ENCODE measurements at regions of chr4 and their contacts with region 1.

Region 1: DNA sequence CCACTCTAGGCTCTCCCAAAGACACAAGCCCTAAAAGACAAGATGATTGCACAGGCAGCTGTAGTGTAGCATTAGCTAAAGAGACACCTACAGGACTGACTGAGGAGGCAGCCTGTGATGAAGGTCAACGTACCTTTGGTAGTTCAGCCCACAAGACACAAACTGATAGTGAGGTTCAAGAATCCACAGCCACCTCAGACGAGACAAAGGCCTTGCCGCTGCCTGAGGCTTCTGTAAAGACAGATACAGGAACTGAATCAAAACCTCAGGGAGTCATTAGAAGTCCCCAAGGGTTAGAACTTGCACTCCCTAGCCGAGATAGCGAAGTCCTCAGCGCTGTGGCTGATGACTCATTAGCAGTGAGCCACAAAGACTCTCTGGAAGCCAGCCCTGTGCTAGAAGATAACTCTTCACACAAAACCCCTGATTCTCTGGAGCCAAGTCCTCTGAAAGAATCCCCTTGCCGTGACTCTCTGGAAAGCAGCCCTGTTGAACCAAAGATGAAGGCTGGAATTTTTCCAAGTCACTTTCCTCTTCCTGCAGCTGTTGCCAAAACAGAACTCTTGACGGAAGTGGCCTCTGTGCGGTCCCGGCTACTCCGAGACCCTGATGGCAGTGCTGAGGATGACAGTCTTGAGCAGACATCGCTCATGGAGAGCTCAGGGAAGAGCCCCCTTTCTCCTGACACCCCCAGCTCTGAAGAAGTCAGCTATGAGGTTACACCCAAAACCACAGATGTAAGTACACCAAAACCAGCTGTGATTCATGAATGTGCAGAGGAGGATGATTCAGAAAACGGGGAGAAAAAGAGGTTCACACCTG is 306.3 kb downstream of the ANK2 start:
- DNase-seq: peak; percentile 79
- H3K4me3 Mint-ChIP-seq: peak overlapping the region; percentile 60
- H3K27ac Mint-ChIP-seq: peak overlapping the region; percentile 89
- H3K4me1 Mint-ChIP-seq: peaks cover 42% of the 10 kb centered on the region
- H3K27me3 Mint-ChIP-seq: peaks cover 54% of the 10 kb centered on the region

Region 2: DNA sequence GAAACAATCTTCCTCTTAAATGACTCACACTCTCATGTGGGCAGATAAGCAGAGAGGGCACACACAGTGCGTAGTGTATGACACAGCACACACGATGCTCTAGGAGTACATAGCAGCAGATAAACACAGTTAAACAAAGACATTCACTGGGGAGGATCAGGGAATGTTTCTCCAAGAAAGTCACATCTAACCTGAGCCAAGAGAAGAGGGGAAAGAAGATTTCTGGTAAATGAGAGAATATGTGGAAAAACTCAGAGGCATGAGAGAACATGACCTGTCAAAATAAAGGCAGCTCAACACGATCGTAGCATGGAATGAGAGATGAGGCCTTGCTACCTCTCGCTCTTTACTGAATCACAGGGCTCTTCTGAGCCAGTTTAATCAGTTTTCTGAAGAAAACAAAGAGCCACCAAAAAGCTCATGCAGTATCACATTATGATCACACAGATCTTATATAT is 55.3 kb before region 1 on chr4:
- intact Hi-C with region 1: loop called (anchors 1 kb)
- DNase-seq: no peak
- H3K4me3 Mint-ChIP-seq: no peak overlapping the region
- H3K27ac Mint-ChIP-seq: peak overlapping the region; percentile 86
- H3K4me1 Mint-ChIP-seq: peaks cover 8% of the 10 kb centered on the region
- H3K27me3 Mint-ChIP-seq: peaks cover 17% of the 10 kb centered on the region

Region 3: GRCh38 chr4:113384600-113384999 is 28.8 kb after region 1 on chr4:
- intact Hi-C with region 1: loop called (anchors 1 kb)
- DNase-seq: no peak
- H3K4me3 Mint-ChIP-seq: no peak overlapping the region
- H3K27ac Mint-ChIP-seq: peak overlapping the region; percentile 48
- H3K4me1 Mint-ChIP-seq: peaks cover 11% of the 10 kb centered on the region
- H3K27me3 Mint-ChIP-seq: peaks cover 17% of the 10 kb centered on the region

Region 4: GRCh38 chr4:113397114-113397701 is 41.4 kb after region 1 on chr4:
- intact Hi-C with region 1: no loop called
- DNase-seq: no peak
- H3K4me3 Mint-ChIP-seq: no peak overlapping the region
- H3K27ac Mint-ChIP-seq: no peak overlapping the region
- H3K4me1 Mint-ChIP-seq: peaks cover 3% of the 10 kb centered on the region
- H3K27me3 Mint-ChIP-seq: peaks cover 4% of the 10 kb centered on the region

Region 5: GRCh38 chr4:113539408-113539807 is 183.6 kb after region 1 on chr4:
- intact Hi-C with region 1: loop called (anchors 1 kb)
- DNase-seq: no peak
- H3K4me3 Mint-ChIP-seq: no peak overlapping the region
- H3K27ac Mint-ChIP-seq: peak overlapping the region; percentile 85
- H3K4me1 Mint-ChIP-seq: peaks cover 45% of the 10 kb centered on the region
- H3K27me3 Mint-ChIP-seq: no peaks in the 10 kb centered on the region

Region 6: GRCh38 chr4:113625902-113626301 is 270.1 kb after region 1 on chr4:
- intact Hi-C with region 1: loop called (anchors 2 kb)
- DNase-seq: no peak
- H3K4me3 Mint-ChIP-seq: peak overlapping the region; percentile 1
- H3K27ac Mint-ChIP-seq: peak overlapping the region; percentile 52
- H3K4me1 Mint-ChIP-seq: peaks cover 45% of the 10 kb centered on the region
- H3K27me3 Mint-ChIP-seq: no peaks in the 10 kb centered on the region

Region 7: DNA sequence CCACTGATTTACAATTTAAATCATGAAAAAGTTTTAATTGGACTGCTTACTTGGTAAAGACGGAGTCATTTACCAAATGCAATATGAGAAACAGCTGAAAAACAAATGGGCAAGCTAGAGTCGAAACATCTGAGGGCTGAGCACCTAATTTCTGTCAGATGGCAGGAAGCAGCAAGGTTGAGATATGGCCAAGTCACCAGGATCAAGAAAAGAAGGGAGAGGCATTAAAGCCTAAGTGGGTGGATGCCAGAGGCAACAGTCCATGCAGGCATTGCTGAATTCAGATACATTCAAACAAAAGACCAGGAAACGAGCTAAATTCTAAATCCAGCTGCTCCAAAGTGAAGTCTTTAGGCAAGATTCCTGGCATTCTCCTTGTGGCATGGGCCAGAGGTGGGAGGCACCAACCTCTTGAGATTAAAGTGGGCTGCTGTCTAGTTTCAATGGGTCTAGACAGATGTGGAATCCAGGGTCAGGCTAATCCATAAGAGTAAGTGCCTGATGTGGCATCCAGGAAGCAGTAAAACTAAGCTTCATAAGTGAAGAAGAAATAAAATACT is 631.7 kb after region 1 on chr4:
- intact Hi-C with region 1: no loop called
- DNase-seq: no peak
- H3K4me3 Mint-ChIP-seq: no peak overlapping the region
- H3K27ac Mint-ChIP-seq: no peak overlapping the region
- H3K4me1 Mint-ChIP-seq: no peaks in the 10 kb centered on the region
- H3K27me3 Mint-ChIP-seq: peaks cover 17% of the 10 kb centered on the region

Measured in activated T-helper 2 cell treated with anti-CD3 and anti-CD28 coated beads, Interferon-gamma antibody, Interleukin-2, Interleukin-4, amounts not matched to agents 10 μg/mL and 5 μg/mL and 100 μg/mL, durations not matched to agents 14 hours and 24 hours and 36 hours (primary cell).